Activated naive CD4-positive, alpha-beta T cell treated with anti-CD3 and anti-CD28 coated beads for 36 hours (primary cell): ENCODE measurements at regions of chr16 and their contacts with region 1.

Region 1: DNA sequence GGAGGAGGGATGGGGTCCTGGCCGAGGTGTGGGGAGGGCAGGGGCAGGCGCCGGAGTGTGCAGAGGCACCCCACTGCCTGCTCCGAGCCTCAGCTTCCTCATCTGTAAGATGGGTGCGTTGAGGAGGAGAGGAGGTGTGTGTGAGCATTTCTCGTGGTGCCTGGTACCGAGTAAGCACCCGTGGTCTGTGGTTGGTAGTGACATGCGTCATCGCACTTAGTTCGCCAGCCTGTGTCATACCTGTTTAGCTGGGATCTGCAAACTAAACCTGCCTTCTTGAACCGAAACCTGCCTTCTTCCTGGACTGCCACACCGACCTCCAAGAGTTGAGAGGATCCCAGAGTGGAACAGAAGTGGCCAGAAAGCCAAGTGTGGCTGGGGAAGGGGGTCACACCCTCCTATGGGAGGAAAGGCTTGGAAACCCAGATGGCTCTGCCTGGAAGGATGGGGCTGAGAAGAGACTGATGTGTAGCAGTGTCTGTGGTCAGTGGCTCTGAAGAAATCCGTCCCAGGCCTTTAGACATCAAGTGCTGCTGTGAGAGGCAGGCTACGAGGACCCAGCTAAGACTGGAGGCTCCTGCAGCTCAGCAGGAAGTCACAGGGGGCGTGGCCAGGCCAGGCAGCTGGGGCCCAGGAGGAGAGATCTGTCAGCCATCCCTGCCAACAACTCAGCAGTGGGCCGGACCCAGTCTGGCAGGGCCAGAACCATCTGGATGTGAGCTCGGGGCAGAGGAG is 162.6 kb upstream of the PLCG2 start:
- DNase-seq: peak; percentile 90
- H3K4me3 Mint-ChIP-seq: peak overlapping the region; percentile 20
- H3K27ac Mint-ChIP-seq: peak overlapping the region; percentile 83
- H3K4me1 Mint-ChIP-seq: peaks cover 16% of the 10 kb centered on the region
- H3K27me3 Mint-ChIP-seq: no peaks in the 10 kb centered on the region

Region 2: DNA sequence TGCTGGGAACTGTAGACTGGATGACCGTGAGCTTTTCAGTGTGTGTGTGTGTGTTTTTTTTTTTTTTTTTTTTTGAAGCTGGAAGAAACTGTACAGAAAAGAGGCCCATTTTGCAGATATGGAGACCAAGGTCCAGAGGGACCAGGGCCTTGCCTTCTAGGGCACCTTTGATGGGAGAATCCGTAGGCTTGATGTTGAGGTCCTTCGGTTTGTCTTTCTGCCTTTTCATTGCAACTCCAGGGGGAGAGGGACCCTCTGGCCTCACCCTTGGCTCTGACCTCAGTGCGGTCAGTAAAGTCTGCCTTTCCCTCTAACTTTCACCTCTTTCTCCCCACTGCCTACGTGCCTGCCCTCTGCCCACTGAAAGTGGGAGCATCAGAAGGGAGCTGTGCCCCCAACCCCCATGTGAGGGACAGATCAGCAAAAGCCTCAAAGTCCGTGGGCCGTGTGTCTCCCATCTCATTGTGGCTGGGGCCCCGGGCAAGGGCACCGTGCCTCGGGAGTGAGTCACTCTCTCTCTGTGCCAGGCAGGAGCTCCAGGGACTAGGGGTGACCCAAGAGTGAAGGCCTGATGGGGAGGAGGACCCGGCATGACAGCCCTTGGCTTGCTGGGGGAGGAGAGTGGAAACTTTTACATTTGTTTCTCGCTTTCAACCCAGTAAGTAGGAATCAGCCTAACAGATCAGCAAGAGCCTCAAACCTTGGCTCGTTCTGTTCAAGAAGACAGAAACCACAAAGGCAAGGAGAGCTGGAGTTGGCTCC is 48.3 kb before region 1 on chr16:
- CTCF ChIA-PET with region 1: no interaction called
- intact Hi-C with region 1: loop called (anchors 1 kb)
- DNase-seq: peak; percentile 50
- H3K4me3 Mint-ChIP-seq: no peak overlapping the region
- H3K27ac Mint-ChIP-seq: peak overlapping the region; percentile 69
- H3K4me1 Mint-ChIP-seq: peaks cover 19% of the 10 kb centered on the region
- H3K27me3 Mint-ChIP-seq: no peaks in the 10 kb centered on the region